Endothelial cell of umbilical vein (primary cell): ENCODE measurements at regions of chr11 and their contacts with region 1.

Region 1: DNA sequence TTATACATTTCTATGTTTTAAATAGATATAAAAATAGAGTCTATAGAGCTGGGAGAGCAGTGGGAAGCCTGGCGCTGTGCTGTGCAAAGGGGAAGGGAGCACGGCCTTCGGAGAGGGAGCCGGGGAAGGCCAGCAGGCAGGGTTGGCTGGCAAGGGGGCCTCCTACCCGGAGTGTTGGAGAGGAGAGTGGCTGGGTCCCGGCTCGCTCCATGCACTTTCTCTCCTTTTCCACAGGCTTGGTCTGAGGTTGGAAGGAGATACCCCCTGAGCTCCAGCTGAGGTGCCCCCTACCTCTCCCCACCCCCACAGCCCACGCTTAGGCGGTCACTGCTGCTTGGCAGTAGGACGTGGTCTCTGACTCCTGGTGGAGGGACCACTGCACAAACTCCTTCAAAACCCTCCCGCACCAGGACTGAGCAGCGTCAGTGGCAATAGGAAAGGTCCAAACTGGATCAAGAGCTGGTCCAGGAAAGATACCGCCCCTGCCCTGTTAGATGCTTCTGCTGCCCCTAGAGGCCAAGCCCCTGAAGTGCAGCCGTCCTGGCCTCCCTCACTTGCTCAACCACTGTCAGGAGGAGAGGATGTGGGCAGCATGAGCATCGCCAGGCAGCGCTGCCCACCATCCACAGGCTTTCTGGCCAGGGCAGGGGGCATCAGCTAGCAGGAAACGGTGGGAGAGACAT is 52.9 kb downstream of the SYT13 start:
- DNase-seq: peak; percentile 52
- H3K4me3 ChIP-seq: no peak overlapping the region
- H3K27ac ChIP-seq: no peak overlapping the region
- H3K4me1 ChIP-seq: no peaks in the 10 kb centered on the region
- H3K27me3 ChIP-seq: peaks cover 4 to 12% of the 10 kb centered on the region in 2 experiments
- CTCF ChIP-seq: peak; percentile 73 to 91
- POLR2A ChIP-seq: no peak

Region 2: GRCh38 chr11:45245218-45246045 is 12.2 kb after region 1 on chr11:
- CTCF ChIA-PET with region 1: interaction called, 33 read pairs
- POLR2A ChIA-PET with region 1: no interaction called
- dilution Hi-C with region 1: no loop called
- intact Hi-C with region 1: no loop called
- DNase-seq: no peak
- H3K4me3 ChIP-seq: no peak overlapping the region
- H3K27ac ChIP-seq: no peak overlapping the region
- H3K4me1 ChIP-seq: no peaks in the 10 kb centered on the region
- H3K27me3 ChIP-seq: peaks cover 4 to 6% of the 10 kb centered on the region in 2 experiments
- CTCF ChIP-seq: no peak
- POLR2A ChIP-seq: no peak